ENCODE measurements at regions of chr11 and their contacts with region 1.

Region 1: DNA sequence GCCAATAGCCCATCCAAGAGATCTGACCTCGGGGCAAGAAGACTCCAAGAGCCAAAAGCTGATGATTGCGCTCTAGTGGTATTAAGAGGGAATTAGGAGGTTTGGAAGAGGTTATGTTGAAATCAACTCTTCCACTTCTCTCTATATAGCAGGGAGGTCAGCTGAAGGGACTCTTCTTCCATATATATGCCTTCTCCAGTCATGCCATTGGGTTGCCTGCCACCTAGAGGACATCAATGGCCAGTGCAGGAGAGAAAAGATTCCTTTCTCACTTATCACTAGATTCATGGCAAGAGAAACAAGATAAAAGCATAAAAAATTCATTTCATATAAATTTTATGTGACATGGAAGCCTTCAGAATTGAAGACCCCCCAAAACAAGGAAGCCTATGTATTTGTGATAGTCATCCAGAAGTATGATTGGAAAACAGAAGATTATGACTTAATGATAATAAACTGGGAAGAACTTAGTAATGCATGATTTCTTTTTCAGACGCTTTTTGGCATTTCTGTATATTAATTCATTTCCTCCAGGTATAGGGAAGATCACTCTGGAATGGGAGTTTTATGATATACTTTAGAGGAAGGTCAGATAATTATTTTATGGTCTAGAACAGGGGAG is 435.1 kb upstream of the DDI1 start:
- DNase-seq: peak; percentile 41
- H3K4me3 ChIP-seq: no peak overlapping the region
- CTCF ChIP-seq: peak; percentile 88

Region 2: GRCh38 chr11:103202048-103202651 is 399.2 kb before region 1 on chr11:
- CTCF ChIA-PET with region 1: interaction called, 29 read pairs
- POLR2A ChIA-PET with region 1: no interaction called
- DNase-seq: no peak
- H3K4me3 ChIP-seq: no peak overlapping the region
- CTCF ChIP-seq: peak; percentile 41

Region 3: GRCh38 chr11:103257360-103257759 is 344.0 kb before region 1 on chr11:
- CTCF ChIA-PET with region 1: interaction called, 26 read pairs
- POLR2A ChIA-PET with region 1: no interaction called
- DNase-seq: no peak
- H3K4me3 ChIP-seq: no peak overlapping the region
- CTCF ChIP-seq: peak; percentile 22

Region 4: GRCh38 chr11:103338621-103339484 is 262.5 kb before region 1 on chr11:
- CTCF ChIA-PET with region 1: interaction called, 13 read pairs
- POLR2A ChIA-PET with region 1: no interaction called
- DNase-seq: no peak
- H3K4me3 ChIP-seq: no peak overlapping the region
- CTCF ChIP-seq: peak; percentile 31

Region 5: DNA sequence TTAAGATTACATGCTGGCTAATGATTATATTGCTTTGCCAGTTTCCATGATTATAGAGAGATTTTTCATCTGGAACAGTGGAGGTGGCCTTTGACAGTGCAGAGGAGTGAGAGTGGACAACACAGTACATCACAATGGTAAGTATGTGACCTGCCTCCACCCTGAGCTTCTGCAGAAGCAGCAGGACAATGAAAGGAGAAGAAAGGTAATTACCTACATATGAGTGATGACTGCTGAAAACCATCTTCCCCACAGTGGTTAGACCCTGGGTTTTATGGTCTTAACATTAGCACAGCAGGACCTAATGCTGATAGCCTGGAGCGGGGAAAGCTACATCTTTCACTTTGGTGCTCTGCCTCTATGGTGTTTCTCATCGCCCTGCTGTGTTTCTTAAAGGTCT is 19.6 kb before region 1 on chr11:
- CTCF ChIA-PET with region 1: interaction called, 12 read pairs
- POLR2A ChIA-PET with region 1: no interaction called
- DNase-seq: no peak
- H3K4me3 ChIP-seq: no peak overlapping the region
- CTCF ChIP-seq: no peak